Activated CD4-positive, alpha-beta T cell treated with anti-CD3 and anti-CD28 coated beads, Interleukin-2, amount 10 ng/mL, durations not matched to agents 7 days and 5 days (primary cell): ENCODE measurements at regions of chr14 and their contacts with region 1.

Region 1: GRCh38 chr14:78232231-78233000 is 62.2 kb downstream of the NRXN3 start:
- DNase-seq: no peak
- H3K4me3 Mint-ChIP-seq: no peak overlapping the region
- H3K27ac Mint-ChIP-seq: no peak overlapping the region
- H3K4me1 Mint-ChIP-seq: no peaks in the 10 kb centered on the region
- H3K27me3 Mint-ChIP-seq: no peaks in the 10 kb centered on the region

Region 2: GRCh38 chr14:78182722-78183121 is 49.7 kb before region 1 on chr14:
- CTCF ChIA-PET with region 1: no interaction called
- POLR2A ChIA-PET with region 1: no interaction called
- DNase-seq: no peak
- H3K4me3 Mint-ChIP-seq: no peak overlapping the region
- H3K27ac Mint-ChIP-seq: no peak overlapping the region
- H3K4me1 Mint-ChIP-seq: no peaks in the 10 kb centered on the region
- H3K27me3 Mint-ChIP-seq: no peaks in the 10 kb centered on the region

Region 3: GRCh38 chr14:78307671-78308070 is 75.3 kb after region 1 on chr14:
- CTCF ChIA-PET with region 1: no interaction called
- POLR2A ChIA-PET with region 1: interaction called, 13 read pairs
- DNase-seq: no peak
- H3K4me3 Mint-ChIP-seq: no peak overlapping the region
- H3K27ac Mint-ChIP-seq: no peak overlapping the region
- H3K4me1 Mint-ChIP-seq: no peaks in the 10 kb centered on the region
- H3K27me3 Mint-ChIP-seq: peaks cover 4% of the 10 kb centered on the region